CD8-positive, alpha-beta memory T cell (primary cell): ENCODE measurements at regions of chr4 and their contacts with region 1.

Region 1: GRCh38 chr4:70984589-70984988 is 8.9 kb upstream of the DCK start:
- DNase-seq: no peak
- H3K4me3 ChIP-seq: no peak overlapping the region
- H3K4me3 Mint-ChIP-seq: no peak overlapping the region
- H3K27ac ChIP-seq: no peak overlapping the region
- H3K27ac Mint-ChIP-seq: peak overlapping the region in 1 of 8 donors; percentile 67
- H3K4me1 ChIP-seq: no peaks in the 10 kb centered on the region
- H3K4me1 Mint-ChIP-seq: no peaks in the 10 kb centered on the region
- H3K27me3 ChIP-seq: no peaks in the 10 kb centered on the region
- H3K27me3 Mint-ChIP-seq: no peaks in the 10 kb centered on the region

Region 2: DNA sequence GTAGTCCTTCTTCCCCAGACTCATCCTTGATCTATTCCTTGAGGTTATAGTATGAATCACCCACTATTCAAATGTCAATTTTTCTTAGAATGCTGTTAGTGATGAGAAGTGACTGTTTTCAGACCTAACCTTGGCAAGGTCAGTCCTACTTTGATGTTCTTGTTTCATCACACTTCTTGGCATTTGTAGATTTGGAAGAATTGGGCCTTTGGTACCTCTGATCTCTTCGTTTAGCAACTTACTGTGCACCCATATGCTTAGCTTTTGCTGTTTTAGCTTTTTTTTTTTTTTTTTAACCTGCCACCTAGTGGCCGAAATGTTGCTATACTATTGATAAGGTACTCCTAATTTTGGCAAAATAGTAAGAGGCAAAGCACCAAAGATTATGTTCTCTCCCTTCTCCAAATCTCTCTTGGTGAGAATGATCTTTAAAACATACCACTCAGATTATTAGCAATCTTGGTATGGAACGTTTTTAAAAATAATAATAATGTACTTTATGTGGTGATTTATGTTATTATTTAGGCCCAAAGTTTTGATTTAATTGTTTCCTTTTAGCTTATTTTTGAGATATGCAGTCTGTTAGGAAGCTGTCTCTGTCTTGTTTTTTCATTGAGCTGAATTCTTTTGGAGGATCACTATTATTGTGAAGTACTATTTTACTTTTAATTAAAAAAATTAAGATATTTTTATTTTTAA is 25.4 kb after region 1 on chr4:
- CTCF ChIA-PET with region 1: interaction called, 16 read pairs
- POLR2A ChIA-PET with region 1: no interaction called
- DNase-seq: peak in 2 of 5 donors; percentile 29 to 48
- H3K4me3 ChIP-seq: no peak overlapping the region
- H3K4me3 Mint-ChIP-seq: peak overlapping the region in 1 of 7 donors; percentile 4
- H3K27ac ChIP-seq: no peak overlapping the region
- H3K27ac Mint-ChIP-seq: peak overlapping the region; percentile 30 to 85 (median 72)
- H3K4me1 ChIP-seq: peaks cover 26% of the 10 kb centered on the region
- H3K4me1 Mint-ChIP-seq: peaks cover 50 to 60% (median 57%) of the 10 kb centered on the region in 3 donors
- H3K27me3 ChIP-seq: no peaks in the 10 kb centered on the region
- H3K27me3 Mint-ChIP-seq: no peaks in the 10 kb centered on the region

Region 3: GRCh38 chr4:71020611-71021010 is 36.0 kb after region 1 on chr4:
- CTCF ChIA-PET with region 1: interaction called, 3 read pairs
- POLR2A ChIA-PET with region 1: interaction called, 10 read pairs
- DNase-seq: no peak
- H3K4me3 ChIP-seq: no peak overlapping the region
- H3K4me3 Mint-ChIP-seq: no peak overlapping the region
- H3K27ac ChIP-seq: no peak overlapping the region
- H3K27ac Mint-ChIP-seq: peak overlapping the region in 1 of 8 donors; percentile 29
- H3K4me1 ChIP-seq: no peaks in the 10 kb centered on the region
- H3K4me1 Mint-ChIP-seq: peaks cover 30 to 54% (median 51%) of the 10 kb centered on the region in 3 donors
- H3K27me3 ChIP-seq: no peaks in the 10 kb centered on the region
- H3K27me3 Mint-ChIP-seq: no peaks in the 10 kb centered on the region